ENCODE measurements at regions of chr6 and their contacts with region 1.

Region 1: GRCh38 chr6:135851442-135852271 is at the start of gene PDE7B:
- DNase-seq: peak; percentile 68
- H3K4me3 Mint-ChIP-seq: peak within 1 kb of the TSS; percentile 94
- H3K27ac Mint-ChIP-seq: peak within 1 kb of the TSS; percentile 89
- H3K4me1 Mint-ChIP-seq: peaks cover 39% of the 10 kb centered on the region
- H3K27me3 Mint-ChIP-seq: no peaks in the 10 kb centered on the region
- total RNA-seq, gene PDE7B: 27.6 and 28.8 TPM in 2 replicates

Region 2: DNA sequence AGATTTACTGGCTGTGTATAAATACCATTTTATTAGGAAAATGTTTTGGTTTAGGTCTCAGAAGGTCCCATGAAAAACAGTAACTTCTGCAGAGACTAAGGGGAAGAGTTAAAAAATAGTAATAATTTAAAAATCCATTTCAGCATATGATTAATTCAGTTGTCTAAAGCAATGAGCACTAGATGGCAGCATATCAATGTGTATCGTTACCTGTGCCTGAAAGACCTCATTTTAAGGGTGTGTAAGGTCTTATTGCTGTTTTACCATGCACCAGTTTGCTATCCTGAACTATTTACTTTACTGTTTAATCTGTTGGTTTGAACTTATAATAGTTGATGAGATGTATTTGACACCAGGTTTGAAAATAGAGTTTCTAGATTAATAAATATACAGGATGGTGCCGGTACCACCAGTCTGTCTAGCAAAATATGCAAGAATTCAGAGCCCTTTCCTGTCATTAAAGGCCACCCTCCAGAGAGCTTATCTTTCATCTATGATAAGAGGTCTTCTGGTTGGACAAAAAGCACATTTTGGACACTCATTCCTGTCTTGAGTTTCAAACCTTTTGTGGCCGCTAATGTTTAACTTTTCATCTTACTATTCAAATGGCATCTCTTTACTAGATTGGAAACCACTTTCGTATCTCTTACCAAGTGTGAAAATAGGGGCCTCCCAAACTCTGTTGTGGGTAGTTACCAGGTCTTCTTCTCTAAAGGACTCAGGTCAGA is 345.2 kb before region 1 on chr6:
- intact Hi-C with region 1: loop called (anchors 1 kb)
- DNase-seq: no peak
- H3K4me3 Mint-ChIP-seq: no peak overlapping the region
- H3K27ac Mint-ChIP-seq: peak overlapping the region; percentile 89
- H3K4me1 Mint-ChIP-seq: peaks cover 34% of the 10 kb centered on the region
- H3K27me3 Mint-ChIP-seq: no peaks in the 10 kb centered on the region

Region 3: DNA sequence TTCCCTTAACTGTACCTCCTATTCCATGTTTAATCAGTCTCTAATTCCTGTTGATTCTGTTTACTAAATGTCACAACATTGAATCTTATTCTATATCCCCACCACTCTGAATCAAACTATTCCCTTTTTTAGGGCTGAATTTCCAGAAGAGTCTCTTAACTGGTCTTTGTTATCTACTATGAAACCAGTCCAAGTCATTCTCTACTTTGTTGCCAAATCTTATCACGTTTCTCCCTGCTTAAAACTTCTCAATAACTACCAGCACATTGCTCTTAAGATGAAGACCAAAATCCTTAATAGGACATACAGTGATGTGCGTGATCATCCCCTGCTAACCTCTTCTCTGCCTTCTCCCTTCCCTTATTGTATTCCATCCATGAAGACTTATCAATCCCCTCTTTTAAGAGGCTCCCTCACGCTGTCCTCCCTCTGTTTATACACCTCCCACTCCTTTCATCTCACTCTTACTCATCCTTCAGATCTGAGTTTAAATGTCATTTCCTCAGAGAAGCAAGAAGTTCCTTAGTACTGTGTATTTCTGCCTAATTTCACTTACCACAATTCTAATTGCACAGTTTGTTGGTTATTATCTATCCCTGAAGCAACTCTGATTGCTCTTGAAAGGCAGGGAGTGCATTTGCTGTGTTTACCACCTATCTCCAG is 211.1 kb before region 1 on chr6:
- intact Hi-C with region 1: loop called (anchors 5 kb)
- DNase-seq: no peak
- H3K4me3 Mint-ChIP-seq: peak overlapping the region; percentile 64
- H3K27ac Mint-ChIP-seq: peak overlapping the region; percentile 94
- H3K4me1 Mint-ChIP-seq: peaks cover 63% of the 10 kb centered on the region
- H3K27me3 Mint-ChIP-seq: no peaks in the 10 kb centered on the region

Region 4: GRCh38 chr6:135703621-135704020 is 148.0 kb before region 1 on chr6:
- intact Hi-C with region 1: loop called (anchors 1 kb)
- DNase-seq: peak; percentile 15
- H3K4me3 Mint-ChIP-seq: peak overlapping the region; percentile 35
- H3K27ac Mint-ChIP-seq: peak overlapping the region; percentile 90
- H3K4me1 Mint-ChIP-seq: peaks cover 41% of the 10 kb centered on the region
- H3K27me3 Mint-ChIP-seq: peaks cover 5% of the 10 kb centered on the region

Region 5: DNA sequence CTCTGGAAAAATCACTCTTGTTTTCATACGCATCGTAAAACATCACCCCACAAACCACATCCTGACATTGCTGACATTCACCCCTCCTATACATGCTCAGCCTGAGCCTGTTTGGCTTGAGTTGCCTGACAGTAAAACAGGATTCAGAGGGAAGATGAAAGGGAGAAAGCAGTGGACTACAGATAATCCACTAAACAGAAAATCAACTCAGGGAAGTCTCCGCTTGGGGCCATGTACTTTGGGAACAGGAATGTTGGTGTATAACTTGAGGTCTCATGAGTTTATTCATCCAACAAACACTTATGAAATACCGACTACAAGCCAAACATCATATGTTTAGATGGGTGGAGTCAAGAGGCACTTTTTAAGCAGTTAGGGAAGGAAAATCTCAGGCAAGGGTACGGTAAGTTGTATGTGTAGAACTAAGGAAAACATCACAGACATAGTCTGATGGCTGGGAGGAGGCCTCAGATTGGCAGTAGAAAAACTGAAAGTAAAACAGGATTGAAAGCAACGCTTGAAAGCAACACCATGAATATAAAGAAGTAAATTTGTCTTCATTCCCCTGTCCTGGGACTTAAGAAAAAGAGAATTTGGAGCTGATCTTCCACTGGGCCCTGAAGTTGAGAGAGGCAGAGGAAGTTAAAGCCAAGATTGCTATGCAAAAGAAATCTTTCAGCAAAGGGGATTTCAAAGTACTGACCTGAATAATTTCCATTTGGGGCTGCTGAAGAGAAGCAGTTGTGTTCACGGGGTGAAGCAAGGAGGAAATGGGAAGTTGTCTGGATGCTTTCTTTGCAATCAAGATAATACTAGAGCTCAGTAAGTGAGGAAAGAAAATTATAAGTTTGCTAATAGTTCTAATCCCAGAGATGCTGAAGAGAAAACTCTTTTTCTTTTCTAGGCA is 28.7 kb after region 1 on chr6:
- intact Hi-C with region 1: loop called (anchors 1 kb)
- DNase-seq: peak; percentile 64
- H3K4me3 Mint-ChIP-seq: peak overlapping the region; percentile 82
- H3K27ac Mint-ChIP-seq: peak overlapping the region; percentile 98
- H3K4me1 Mint-ChIP-seq: peaks cover 66% of the 10 kb centered on the region
- H3K27me3 Mint-ChIP-seq: no peaks in the 10 kb centered on the region

Region 6: DNA sequence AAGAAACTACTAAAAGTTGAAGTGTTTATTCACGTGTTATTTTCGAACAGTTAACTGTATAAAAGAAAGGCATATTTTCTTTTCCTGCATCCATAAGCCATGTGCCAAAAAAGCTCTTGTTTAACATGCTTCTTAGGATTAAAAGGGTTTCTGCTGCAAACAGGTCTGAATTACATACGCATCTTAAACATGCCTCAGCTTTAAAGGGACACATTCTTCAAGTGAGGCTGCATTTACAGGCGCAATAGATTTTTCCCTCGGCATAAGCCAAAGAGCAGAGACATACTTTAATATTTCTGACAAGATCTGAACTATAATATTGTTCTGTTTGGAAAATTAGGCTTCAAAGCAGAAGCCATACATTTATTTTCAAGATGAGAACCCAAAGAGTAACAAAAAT is 39.2 kb after region 1 on chr6:
- intact Hi-C with region 1: no loop called
- DNase-seq: no peak
- H3K4me3 Mint-ChIP-seq: no peak overlapping the region
- H3K27ac Mint-ChIP-seq: no peak overlapping the region
- H3K4me1 Mint-ChIP-seq: peaks cover 16% of the 10 kb centered on the region
- H3K27me3 Mint-ChIP-seq: no peaks in the 10 kb centered on the region

Region 7: GRCh38 chr6:135922174-135922573 is 70.5 kb after region 1 on chr6:
- intact Hi-C with region 1: loop called (anchors 5 kb)
- DNase-seq: no peak
- H3K4me3 Mint-ChIP-seq: peak overlapping the region; percentile 30
- H3K27ac Mint-ChIP-seq: peak overlapping the region; percentile 80
- H3K4me1 Mint-ChIP-seq: peaks cover 43% of the 10 kb centered on the region
- H3K27me3 Mint-ChIP-seq: no peaks in the 10 kb centered on the region

Region 8: GRCh38 chr6:135962731-135963130 is 111.1 kb after region 1 on chr6:
- intact Hi-C with region 1: no loop called
- DNase-seq: no peak
- H3K4me3 Mint-ChIP-seq: no peak overlapping the region
- H3K27ac Mint-ChIP-seq: no peak overlapping the region
- H3K4me1 Mint-ChIP-seq: no peaks in the 10 kb centered on the region
- H3K27me3 Mint-ChIP-seq: no peaks in the 10 kb centered on the region

Region 9: GRCh38 chr6:135985471-135985870 is 133.8 kb after region 1 on chr6:
- intact Hi-C with region 1: no loop called
- DNase-seq: no peak
- H3K4me3 Mint-ChIP-seq: no peak overlapping the region
- H3K27ac Mint-ChIP-seq: no peak overlapping the region
- H3K4me1 Mint-ChIP-seq: peaks cover 5% of the 10 kb centered on the region
- H3K27me3 Mint-ChIP-seq: no peaks in the 10 kb centered on the region

Region 10: GRCh38 chr6:136086686-136087085 is 235.0 kb after region 1 on chr6:
- intact Hi-C with region 1: no loop called
- DNase-seq: no peak
- H3K4me3 Mint-ChIP-seq: no peak overlapping the region
- H3K27ac Mint-ChIP-seq: no peak overlapping the region
- H3K4me1 Mint-ChIP-seq: peaks cover 22% of the 10 kb centered on the region
- H3K27me3 Mint-ChIP-seq: no peaks in the 10 kb centered on the region